HEK293 (cell line): ENCODE measurements at regions of chr2 and their contacts with region 1.

Region 1: GRCh38 chr2:69741619-69742466 is at the start of gene ANXA4:
- H3K4me3 ChIP-seq: peak within 1 kb of the TSS; percentile 70
- H3K27ac ChIP-seq: peak within 1 kb of the TSS; percentile 85
- H3K4me1 ChIP-seq: peaks cover 9% of the 10 kb centered on the region
- CTCF ChIP-seq: 0 out of 2 replicates have a peak, but pooled peaks have one; percentile 32

Region 2: DNA sequence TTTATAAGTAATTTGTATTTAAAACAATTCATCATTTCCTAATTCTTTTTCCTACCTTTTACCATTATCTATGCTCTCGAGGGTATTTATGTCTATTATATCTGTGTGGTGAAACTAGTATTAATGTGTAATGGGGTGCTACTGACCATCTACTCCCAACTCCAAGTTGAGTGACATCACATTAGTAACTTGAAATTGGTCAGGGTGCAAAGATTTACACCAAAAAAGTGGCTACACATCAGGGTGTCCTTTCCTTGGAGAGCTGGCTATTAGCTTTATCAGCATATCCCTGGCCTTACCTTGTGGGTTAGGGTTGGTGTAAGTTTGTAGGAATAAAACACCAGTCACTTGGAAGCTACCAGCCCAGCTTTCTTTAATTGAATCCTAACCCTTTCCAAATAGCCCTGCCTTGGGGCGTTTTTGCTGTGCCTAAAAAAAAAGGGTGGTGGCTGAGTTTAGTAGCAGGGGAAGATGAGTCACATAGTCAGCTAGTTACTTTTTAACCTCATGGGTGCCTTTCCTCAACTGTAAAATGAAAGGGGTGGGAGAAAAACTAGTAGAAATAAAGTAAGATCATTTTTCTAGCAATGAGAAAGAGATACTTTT is 14.1 kb after region 1 on chr2:
- CTCF ChIA-PET with region 1: interaction called, 4 read pairs
- POLR2A ChIA-PET with region 1: interaction called, 13 read pairs
- H3K4me3 ChIP-seq: no peak overlapping the region
- H3K27ac ChIP-seq: no peak overlapping the region; the same call in 1 of the 2 replicates
- H3K4me1 ChIP-seq: no peaks in the 10 kb centered on the region
- CTCF ChIP-seq: no peak

Region 3: DNA sequence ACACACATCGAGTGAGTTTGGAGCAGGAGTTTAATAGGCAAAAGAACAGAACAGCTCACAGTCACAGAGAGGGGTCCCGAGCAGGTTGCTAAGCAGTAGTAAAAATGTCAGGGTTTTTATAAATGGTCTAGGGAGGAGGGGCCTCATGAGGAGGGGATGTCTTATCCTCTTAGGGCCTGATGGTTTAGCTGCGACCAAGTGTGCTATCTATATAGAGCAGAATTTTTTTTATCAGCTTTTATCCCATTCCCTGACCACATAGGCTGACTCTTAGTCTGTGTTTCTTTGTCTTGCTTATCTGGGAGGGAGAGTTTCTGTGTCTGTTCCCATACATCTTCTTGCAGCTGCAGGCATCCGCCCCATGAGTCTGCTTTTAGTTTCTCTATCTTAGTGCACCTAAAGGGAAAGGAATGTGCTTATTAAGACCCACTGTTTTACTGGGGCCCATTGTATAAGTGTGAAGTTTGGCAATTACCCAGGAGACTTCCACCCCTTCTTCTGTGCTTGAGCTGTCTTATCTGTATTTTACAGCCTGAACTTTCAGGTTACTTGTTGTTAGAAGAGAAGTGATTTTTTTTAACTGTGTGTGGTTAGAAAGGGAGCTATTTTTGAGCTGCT is 57.2 kb after region 1 on chr2:
- CTCF ChIA-PET with region 1: interaction called, 4 read pairs
- POLR2A ChIA-PET with region 1: interaction called, 15 read pairs
- H3K4me3 ChIP-seq: peak overlapping the region; percentile 21
- H3K27ac ChIP-seq: peak overlapping the region; percentile 29; the same call in 1 of the 2 replicates
- H3K4me1 ChIP-seq: peaks cover 12% of the 10 kb centered on the region
- CTCF ChIP-seq: no peak